GM18951 (cell line): ENCODE measurements at regions of chr1 and their contacts with region 1.

Region 1: DNA sequence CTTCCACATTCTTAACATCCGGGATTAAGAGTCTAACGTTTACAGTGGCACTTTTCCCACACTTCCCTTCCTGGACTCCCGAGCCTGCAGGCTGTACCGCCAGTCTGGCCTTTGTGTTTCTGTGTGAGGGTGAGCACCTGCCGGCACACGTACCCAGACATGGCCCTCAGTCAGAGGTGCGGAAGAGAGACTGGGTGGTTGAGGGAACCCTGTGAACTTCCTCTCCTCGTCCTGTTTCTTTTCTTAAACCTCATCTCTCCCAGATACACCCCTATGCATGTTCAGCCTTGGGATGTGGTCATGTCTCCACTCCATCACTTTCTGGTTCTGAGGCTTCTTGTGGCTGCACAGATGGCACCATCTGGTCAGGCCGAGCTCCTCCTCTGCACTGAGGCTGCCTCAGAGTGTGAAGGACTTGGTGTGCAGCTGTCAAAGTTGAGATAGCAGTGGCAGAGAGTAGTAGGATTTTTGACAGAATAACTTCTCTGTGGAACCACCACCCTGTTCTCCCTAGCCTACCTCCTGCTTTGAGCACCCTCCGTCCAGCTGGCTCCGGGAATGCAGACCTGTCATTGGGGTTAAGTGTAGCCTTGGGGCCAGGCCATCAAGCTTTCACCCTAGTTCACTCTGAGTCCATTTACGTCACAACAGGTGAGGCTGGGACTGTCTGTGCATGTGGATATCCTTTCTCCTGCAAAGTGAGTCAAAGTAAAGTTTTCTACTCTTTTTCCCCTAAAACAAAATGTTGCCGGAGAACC is 31.4 kb downstream of the VASH2 start:
- POLR2A ChIP-seq: peak; percentile 25

Region 2: GRCh38 chr1:212455803-212456528 is 525.8 kb before region 1 on chr1:
- in situ Hi-C with region 1: loop called (anchors 25 kb)
- POLR2A ChIP-seq: no peak

Region 3: DNA sequence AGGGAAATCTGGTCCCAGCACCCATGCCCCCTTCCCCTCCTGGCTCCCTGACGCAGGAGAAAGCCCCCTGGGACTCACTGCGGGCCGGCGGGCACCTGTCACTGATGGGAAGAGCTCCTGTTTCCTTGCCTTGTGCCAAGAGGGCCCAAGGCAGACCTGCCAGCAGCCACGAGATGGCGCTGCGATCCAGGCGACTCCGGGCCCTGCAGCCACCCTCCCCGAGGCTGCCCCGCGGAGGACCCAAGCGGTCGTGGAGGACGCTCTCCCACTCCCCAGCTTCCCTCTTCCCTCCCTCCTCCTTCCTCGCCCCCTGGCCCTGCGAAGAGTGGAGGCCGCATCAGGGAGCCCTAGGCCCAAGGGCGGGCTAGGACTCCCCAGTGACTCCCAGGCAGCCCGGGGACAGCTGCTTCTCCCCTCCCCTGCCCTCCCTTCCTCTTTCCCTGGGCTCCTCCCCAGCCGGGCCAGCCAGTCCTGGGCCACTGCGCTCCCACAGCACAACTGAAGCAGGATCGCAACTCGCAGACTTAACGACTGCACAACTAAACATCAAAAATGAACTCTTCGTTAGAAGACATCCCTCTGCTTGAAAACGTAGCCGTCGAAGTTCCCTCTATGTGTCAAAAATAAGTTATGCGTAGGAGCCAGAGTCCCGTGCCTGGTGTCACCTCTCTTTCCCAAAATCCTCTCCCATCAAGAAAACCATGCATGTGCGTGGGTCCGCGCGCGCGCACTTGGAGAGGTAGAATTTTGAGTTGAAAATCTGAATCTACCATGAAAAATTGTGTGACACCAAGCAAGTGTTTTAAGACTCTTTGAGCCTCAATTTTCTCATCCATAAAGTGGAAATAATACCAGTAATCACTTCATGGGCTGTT is 316.3 kb before region 1 on chr1:
- in situ Hi-C with region 1: loop called (anchors 25 kb)
- POLR2A ChIP-seq: no peak

Region 4: GRCh38 chr1:212814537-212815334 is 167.0 kb before region 1 on chr1:
- in situ Hi-C with region 1: loop called (anchors 25 kb)
- POLR2A ChIP-seq: no peak